Common myeloid progenitor, CD34-positive (primary cell): ENCODE measurements at regions of chr14 and their contacts with region 1.

Region 1: DNA sequence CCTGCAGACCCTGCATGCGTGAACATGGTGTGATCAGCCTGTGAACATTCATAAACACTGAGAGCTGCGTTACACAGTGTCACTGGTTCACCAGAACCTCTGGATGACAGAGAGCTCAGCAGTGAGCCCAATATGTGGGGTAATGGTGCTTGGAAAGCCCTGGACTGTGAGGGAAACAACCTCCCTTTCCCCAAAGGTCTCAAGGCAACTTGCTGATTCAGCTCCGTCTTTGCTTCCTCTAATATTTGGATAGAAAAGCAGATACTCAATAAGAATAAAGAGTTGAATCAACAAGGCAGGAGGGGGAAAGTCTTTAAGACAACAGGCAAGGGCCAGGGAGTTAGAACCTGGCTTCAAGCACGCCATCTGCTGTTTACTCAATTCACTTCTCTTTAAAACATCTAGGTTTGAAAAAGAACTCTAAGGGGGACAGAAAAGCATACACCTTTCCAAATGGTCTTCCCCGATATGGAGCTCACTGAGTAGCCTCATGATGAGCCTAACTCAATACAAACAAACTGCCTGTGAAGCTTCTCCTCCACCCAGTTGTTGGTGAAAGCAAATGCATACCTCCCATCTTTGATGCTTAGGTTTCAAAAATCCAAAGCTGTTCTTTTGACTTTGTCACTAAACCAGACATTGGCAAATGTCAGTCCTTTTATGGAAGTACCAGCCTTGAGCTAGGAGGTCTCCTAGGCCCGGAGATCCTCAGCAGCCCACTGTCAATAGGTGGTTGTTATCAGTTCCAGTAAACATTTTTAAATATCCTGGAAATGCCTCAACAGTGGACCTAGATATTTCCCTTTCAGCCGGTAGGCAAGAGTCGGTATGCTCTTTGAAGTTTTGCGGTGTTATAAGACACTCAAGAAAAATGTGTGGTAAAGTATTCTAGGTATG is 76.1 kb downstream of the SAMD4A start:
- DNase-seq: peak; percentile 34 to 66 (median 58)
- H3K4me3 ChIP-seq: no peak overlapping the region
- H3K27ac ChIP-seq: no peak overlapping the region
- H3K4me1 ChIP-seq: no peaks in the 10 kb centered on the region
- H3K27me3 ChIP-seq: no peaks in the 10 kb centered on the region

Region 2: GRCh38 chr14:54291491-54292191 is 351.4 kb before region 1 on chr14:
- CTCF ChIA-PET with region 1: no interaction called
- POLR2A ChIA-PET with region 1: no interaction called
- DNase-seq: no peak
- H3K4me3 ChIP-seq: no peak overlapping the region
- H3K27ac ChIP-seq: no peak overlapping the region
- H3K4me1 ChIP-seq: no peaks in the 10 kb centered on the region
- H3K27me3 ChIP-seq: peaks cover 0 to 15% (median 6%) of the 10 kb centered on the region in 5 experiments

Region 3: GRCh38 chr14:54574528-54574927 is 68.5 kb before region 1 on chr14:
- CTCF ChIA-PET with region 1: interaction called, 12 read pairs
- POLR2A ChIA-PET with region 1: no interaction called
- DNase-seq: no peak
- H3K4me3 ChIP-seq: no peak overlapping the region
- H3K27ac ChIP-seq: no peak overlapping the region
- H3K4me1 ChIP-seq: no peaks in the 10 kb centered on the region
- H3K27me3 ChIP-seq: peaks cover 0 to 2% (median 0%) of the 10 kb centered on the region in 5 experiments

Region 4: GRCh38 chr14:54629635-54630360 is 13.3 kb before region 1 on chr14:
- CTCF ChIA-PET with region 1: interaction called, 40 read pairs
- POLR2A ChIA-PET with region 1: no interaction called
- DNase-seq: no peak
- H3K4me3 ChIP-seq: peak overlapping the region in 1 of 7 experiments; percentile 5
- H3K27ac ChIP-seq: no peak overlapping the region
- H3K4me1 ChIP-seq: peaks cover 18 to 47% (median 31%) of the 10 kb centered on the region in 4 experiments
- H3K27me3 ChIP-seq: no peaks in the 10 kb centered on the region

Region 5: GRCh38 chr14:54665946-54666345 is 22.9 kb after region 1 on chr14:
- CTCF ChIA-PET with region 1: interaction called, 10 read pairs
- POLR2A ChIA-PET with region 1: no interaction called
- DNase-seq: no peak
- H3K4me3 ChIP-seq: no peak overlapping the region
- H3K27ac ChIP-seq: no peak overlapping the region
- H3K4me1 ChIP-seq: peaks cover 0 to 14% (median 0%) of the 10 kb centered on the region in 4 experiments
- H3K27me3 ChIP-seq: no peaks in the 10 kb centered on the region